Right ventricle myocardium superior (tissue), 1 donor: ENCODE measurements at regions of chr11 and their contacts with region 1.

Region 1: GRCh38 chr11:29634248-29634647 is 382.6 kb downstream of the KCNA4 start:
- DNase-seq: no peak
- ATAC-seq: no peak

Region 2: GRCh38 chr11:29452146-29452545 is 182.1 kb before region 1 on chr11:
- intact Hi-C with region 1: loop called (anchors 10 kb)
- DNase-seq: no peak
- ATAC-seq: no peak